Right ventricle myocardium inferior (tissue), 1 donor: ENCODE measurements at regions of chr11 and their contacts with region 1.

Region 1: GRCh38 chr11:59680287-59681154 is 11.7 kb upstream of the PATL1 start:
- DNase-seq: no peak
- ATAC-seq: peak; percentile 88

Region 2: GRCh38 chr11:59542142-59542810 is 138.2 kb before region 1 on chr11:
- intact Hi-C with region 1: loop called (anchors 2 kb)
- DNase-seq: no peak
- ATAC-seq: no peak